Left cardiac atrium (tissue), 4 donors: ENCODE measurements at regions of chr7 and their contacts with region 1.

Region 1: DNA sequence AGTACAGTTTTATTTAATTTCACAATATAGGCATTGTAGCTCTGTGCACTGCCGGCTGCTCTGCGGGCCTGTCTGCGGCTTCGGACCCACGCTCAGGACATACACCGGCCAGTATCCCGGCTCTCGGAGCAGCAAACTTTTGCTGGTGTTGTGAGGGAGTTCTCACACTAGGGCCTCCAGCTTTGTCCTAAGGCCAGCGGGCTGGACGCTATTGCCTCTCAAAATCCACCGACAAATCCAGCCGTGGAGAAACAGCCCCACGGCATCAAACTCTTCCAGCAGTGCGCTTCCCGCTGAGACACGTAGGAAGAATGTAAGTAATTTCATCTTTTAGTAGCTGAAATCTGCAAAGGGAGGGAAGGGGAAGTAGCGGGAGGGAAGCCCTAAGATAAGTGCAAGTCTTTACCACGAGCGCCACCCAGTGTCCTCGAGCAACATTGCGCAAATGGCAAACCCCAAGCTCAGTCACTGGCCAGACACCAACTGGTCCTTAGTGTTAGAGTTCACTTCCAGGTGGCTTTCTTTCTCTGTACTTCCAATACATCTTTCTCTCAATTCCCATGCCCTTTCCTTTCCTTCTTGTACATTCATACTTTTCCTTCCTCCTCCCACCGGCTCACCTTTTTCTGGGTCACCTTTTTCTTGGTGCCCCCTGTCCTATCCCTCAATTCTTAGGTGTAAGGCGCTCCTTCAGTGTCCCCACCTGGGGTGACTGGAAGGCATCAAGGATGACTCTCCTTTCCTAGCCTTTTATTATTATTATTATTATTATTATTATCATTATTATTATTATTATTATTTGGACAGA is 3.0 kb upstream of the DLX5 start:
- DNase-seq: peak; percentile 77
- ATAC-seq: peak; percentile 79 to 91

Region 2: GRCh38 chr7:95916573-95917297 is 1110.9 kb before region 1 on chr7:
- intact Hi-C with region 1: loop called in 1 of 2 experiments (anchors 10 kb)
- DNase-seq: peak; percentile 73
- ATAC-seq: peak; percentile 77 to 81

Region 3: GRCh38 chr7:96075510-96076349 is 951.9 kb before region 1 on chr7:
- intact Hi-C with region 1: loop called (anchors 2 to 10 kb)
- DNase-seq: peak; percentile 68
- ATAC-seq: peak; percentile 96 to 98

Region 4: DNA sequence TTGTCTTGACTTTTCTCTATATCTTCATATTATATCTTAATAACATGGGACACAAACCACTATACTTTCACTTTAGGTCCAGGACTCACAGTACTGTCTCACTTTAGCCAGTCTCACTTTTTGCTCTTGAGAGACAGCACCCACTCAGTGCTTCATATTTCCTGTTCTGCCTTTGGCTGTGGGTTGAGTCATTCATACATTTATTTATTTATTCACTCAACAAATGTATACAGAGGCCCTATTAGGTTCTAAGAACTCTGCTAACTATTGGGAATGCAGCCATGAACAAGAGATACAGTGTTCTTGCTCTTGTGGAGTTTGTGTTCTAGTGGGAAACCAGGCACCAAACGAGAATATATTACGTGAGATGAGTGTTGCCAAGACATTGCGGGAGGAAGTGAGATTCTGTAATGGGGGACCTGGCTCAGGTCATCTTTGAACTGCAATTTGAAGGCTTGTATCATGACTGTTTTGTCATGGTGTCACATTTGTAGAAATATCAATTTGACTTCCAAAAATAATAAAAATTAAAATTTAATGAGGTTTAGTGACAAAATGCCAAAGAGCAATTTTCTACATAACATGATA is 280.0 kb after region 1 on chr7:
- intact Hi-C with region 1: no loop called
- DNase-seq: no peak
- ATAC-seq: no peak